Caco-2 (cell line): ENCODE measurements at regions of chr10 and their contacts with region 1.

Region 1: DNA sequence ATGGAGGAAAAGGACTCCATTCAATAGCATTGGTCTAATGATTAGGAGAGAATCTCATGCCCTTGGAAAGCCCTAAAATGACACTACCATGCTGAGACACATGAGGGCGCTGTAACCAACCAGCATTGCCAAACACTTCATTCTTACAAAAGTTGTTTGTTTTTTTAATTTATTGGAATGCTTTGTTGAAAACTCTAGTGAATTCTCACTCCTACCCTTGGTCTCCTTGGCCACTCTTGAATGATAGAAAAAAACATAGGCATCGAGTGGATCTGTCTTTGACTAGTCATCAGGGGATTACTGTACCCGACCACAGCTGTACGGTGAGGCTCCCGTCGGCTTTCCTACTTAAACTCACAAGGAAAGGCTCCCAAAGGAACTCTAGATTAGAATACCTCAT is 29.3 kb upstream of the ADD3 start:
- DNase-seq: peak; percentile 45 to 60
- H3K4me3 ChIP-seq: no peak overlapping the region
- H3K4me3 Mint-ChIP-seq: peak overlapping the region; percentile 55
- H3K27ac Mint-ChIP-seq: peak overlapping the region; percentile 79
- H3K4me1 ChIP-seq: peaks cover 47% of the 10 kb centered on the region
- H3K4me1 Mint-ChIP-seq: peaks cover 69% of the 10 kb centered on the region
- H3K27me3 ChIP-seq: no peaks in the 10 kb centered on the region
- H3K27me3 Mint-ChIP-seq: no peaks in the 10 kb centered on the region
- CTCF ChIP-seq: peak; percentile 42 to 65

Region 2: GRCh38 chr10:109875151-109875568 is 103.3 kb before region 1 on chr10:
- CTCF ChIA-PET with region 1: no interaction called
- POLR2A ChIA-PET with region 1: no interaction called
- intact Hi-C with region 1: no loop called
- DNase-seq: no peak
- H3K4me3 ChIP-seq: no peak overlapping the region
- H3K4me3 Mint-ChIP-seq: no peak overlapping the region
- H3K27ac Mint-ChIP-seq: no peak overlapping the region
- H3K4me1 ChIP-seq: 0 out of 2 replicates have a peak, but pooled peaks cover 3% of the 10 kb centered on the region
- H3K4me1 Mint-ChIP-seq: no peaks in the 10 kb centered on the region
- H3K27me3 ChIP-seq: no peaks in the 10 kb centered on the region
- H3K27me3 Mint-ChIP-seq: no peaks in the 10 kb centered on the region
- CTCF ChIP-seq: no peak

Region 3: DNA sequence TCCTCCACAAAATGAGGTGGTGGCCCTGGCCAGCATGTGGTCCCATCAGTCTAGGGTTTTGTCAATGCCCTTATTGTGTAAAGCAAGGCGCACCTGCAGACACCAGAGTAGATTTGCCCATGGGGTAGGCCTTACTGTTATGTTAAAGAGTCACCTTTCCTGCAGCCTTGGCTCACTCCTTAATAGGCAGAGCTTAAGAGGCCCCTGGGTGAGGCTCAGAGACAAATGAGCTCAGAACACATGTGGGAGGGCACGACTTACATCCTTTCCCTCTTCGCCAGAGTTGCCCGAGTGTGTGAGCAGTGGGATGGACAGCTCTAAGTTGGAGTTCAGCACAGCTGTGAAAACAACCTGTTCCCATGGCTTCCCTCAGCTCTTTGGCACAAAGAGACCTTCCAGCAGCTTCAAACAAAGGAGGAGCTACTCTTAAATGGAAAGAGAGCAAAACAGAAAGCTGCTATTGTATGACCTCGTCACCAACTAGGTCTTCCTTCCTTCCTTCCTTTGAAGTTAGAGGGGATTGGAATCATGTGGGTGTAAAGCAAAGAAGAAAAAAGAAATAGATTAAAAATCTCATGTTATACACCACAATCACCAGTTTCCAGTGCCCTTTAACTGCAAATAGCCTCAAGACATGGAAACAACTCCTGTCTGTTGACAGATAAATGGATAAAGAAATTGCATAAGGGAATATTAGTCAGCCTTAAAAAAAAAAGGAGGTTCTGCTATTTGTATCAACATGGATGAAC is 43.3 kb before region 1 on chr10:
- CTCF ChIA-PET with region 1: no interaction called
- POLR2A ChIA-PET with region 1: no interaction called
- intact Hi-C with region 1: no loop called
- DNase-seq: no peak
- H3K4me3 ChIP-seq: no peak overlapping the region
- H3K4me3 Mint-ChIP-seq: no peak overlapping the region
- H3K27ac Mint-ChIP-seq: no peak overlapping the region
- H3K4me1 ChIP-seq: no peaks in the 10 kb centered on the region
- H3K4me1 Mint-ChIP-seq: no peaks in the 10 kb centered on the region
- H3K27me3 ChIP-seq: no peaks in the 10 kb centered on the region
- H3K27me3 Mint-ChIP-seq: no peaks in the 10 kb centered on the region
- CTCF ChIP-seq: no peak

Region 4: GRCh38 chr10:109996225-109996624 is 17.7 kb after region 1 on chr10:
- CTCF ChIA-PET with region 1: no interaction called
- POLR2A ChIA-PET with region 1: no interaction called
- intact Hi-C with region 1: loop called (anchors 1 kb)
- DNase-seq: no peak
- H3K4me3 ChIP-seq: peak overlapping the region; percentile 28
- H3K4me3 Mint-ChIP-seq: peak overlapping the region; percentile 73
- H3K27ac Mint-ChIP-seq: peak overlapping the region; percentile 82
- H3K4me1 ChIP-seq: peaks cover 92% of the 10 kb centered on the region
- H3K4me1 Mint-ChIP-seq: peaks cover 54% of the 10 kb centered on the region
- H3K27me3 ChIP-seq: no peaks in the 10 kb centered on the region
- H3K27me3 Mint-ChIP-seq: no peaks in the 10 kb centered on the region
- CTCF ChIP-seq: no peak

Region 5: DNA sequence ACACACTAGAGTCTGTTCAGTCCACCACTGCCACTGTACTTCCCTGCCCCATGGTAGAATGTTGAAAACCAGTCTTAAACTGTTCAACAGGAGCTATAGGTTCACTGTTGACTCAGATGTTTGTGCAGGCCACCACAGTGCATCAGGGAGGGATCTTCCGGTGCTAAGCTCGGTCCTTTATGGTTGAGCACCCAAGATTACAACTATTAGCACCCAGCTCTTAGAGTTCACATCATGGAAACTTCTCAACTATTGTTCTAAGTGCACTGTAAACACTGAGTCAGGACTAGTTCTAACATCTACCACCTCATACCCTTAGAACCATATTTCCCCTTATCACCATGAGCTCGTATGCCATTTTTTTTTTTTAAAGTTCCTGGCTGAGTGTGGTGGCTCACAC is 131.9 kb after region 1 on chr10:
- CTCF ChIA-PET with region 1: no interaction called
- POLR2A ChIA-PET with region 1: no interaction called
- intact Hi-C with region 1: no loop called
- DNase-seq: no peak
- H3K4me3 ChIP-seq: no peak overlapping the region
- H3K4me3 Mint-ChIP-seq: no peak overlapping the region
- H3K27ac Mint-ChIP-seq: no peak overlapping the region
- H3K4me1 ChIP-seq: no peaks in the 10 kb centered on the region
- H3K4me1 Mint-ChIP-seq: peaks cover 6% of the 10 kb centered on the region
- H3K27me3 ChIP-seq: no peaks in the 10 kb centered on the region
- H3K27me3 Mint-ChIP-seq: no peaks in the 10 kb centered on the region
- CTCF ChIP-seq: no peak